Heart left ventricle (tissue), 16 donors: ENCODE measurements at regions of chrX and their contacts with region 1.

Region 1: GRCh38 chrX:110407910-110408545 is 49.4 kb downstream of the RTL9 start:
- DNase-seq: peak in 2 of 5 donors; percentile 32 to 50
- ATAC-seq: peak in 3 of 4 donors; percentile 59 to 77 (median 62)
- H3K4me3 ChIP-seq: no peak overlapping the region
- H3K27ac ChIP-seq: no peak overlapping the region
- H3K4me1 ChIP-seq: peaks cover 0 to 4% (median 0%) of the 10 kb centered on the region in 12 donors
- H3K27me3 ChIP-seq: peaks cover 0 to 49% (median 0%) of the 10 kb centered on the region in 9 donors
- CTCF ChIP-seq: peak; percentile 55 to 74 (median 66)
- POLR2A ChIP-seq: no peak

Region 2: DNA sequence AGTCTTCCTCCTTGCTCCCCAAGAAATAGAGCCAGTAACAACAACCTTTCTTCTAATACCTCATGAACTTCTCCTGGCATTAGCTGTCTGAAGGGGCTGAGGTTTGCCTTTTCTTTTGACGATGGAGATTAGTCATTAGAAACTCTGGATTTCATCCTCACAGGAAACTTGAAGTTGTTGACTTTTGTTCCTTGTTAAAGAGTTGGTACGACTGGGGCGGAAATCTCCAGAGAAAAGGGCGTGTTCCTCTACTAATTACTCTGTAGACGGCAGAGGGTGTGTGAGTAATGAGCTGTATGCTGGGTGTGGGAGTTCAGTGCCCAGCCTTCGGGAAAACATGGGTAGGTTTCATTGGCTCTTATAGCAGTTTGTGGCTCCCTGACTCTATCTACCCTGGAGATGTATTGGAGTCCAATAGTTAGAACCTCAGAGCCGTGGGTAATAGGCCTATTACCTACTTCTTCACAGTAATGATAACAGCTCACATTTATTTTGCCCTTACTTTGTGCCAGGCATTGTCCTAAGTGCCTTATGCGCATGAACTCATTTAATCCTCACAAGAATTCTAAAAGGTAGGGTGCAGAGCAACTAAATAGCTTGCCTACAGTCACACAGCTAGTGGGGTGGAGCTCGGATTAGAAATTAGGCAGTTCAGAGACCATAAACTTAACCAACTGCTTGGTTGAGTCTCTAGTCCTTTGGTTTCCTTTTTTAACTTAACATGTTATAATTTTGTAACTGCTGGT is 381.8 kb before region 1 on chrX:
- intact Hi-C with region 1: loop called in 1 of 10 experiments (anchors 5 kb)
- DNase-seq: no peak
- ATAC-seq: peak in 3 of 4 donors; percentile 59 to 78 (median 60)
- H3K4me3 ChIP-seq: no peak overlapping the region
- H3K27ac ChIP-seq: peak overlapping the region in 7 of 12 donors; percentile 18 to 61 (median 49)
- H3K4me1 ChIP-seq: peaks cover 0 to 39% (median 8%) of the 10 kb centered on the region in 12 donors
- H3K27me3 ChIP-seq: peaks cover 0 to 10% (median 0%) of the 10 kb centered on the region in 9 donors
- CTCF ChIP-seq: no peak
- POLR2A ChIP-seq: no peak

Region 3: DNA sequence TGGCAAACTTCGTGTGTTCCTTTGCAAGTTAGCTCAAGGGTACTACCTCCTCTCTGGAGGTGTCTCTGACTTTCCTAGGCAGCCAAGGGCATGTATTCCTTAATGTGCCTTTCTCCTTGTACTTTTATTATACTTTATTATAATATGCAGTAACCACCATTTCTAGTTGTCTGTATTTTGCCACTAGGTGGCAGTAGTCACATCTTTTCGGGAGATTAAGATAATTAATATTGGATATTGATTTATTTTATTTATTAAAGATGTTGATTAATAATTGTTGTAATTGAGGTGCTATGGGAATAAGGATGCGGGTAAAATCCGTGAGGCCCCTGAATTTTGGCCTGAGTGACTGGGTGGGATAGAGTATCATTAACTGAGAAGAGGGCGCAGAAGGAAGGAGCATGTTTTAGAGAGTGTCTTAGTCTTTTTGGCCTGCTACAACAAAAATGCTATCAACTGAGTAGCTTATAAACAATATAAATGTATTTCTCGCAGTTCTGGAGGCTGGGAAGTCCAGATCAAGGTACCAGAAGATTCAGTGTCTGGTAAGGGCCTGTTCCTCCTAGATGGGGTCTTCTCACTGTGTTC is 251.8 kb before region 1 on chrX:
- intact Hi-C with region 1: loop called (anchors 1 to 5 kb)
- DNase-seq: no peak
- ATAC-seq: no peak
- H3K4me3 ChIP-seq: no peak overlapping the region
- H3K27ac ChIP-seq: no peak overlapping the region
- H3K4me1 ChIP-seq: peaks cover 0 to 10% (median 4%) of the 10 kb centered on the region in 12 donors
- H3K27me3 ChIP-seq: peaks cover 0 to 5% (median 0%) of the 10 kb centered on the region in 9 donors
- CTCF ChIP-seq: peak; percentile 22 to 62 (median 52)
- POLR2A ChIP-seq: no peak

Region 4: GRCh38 chrX:110167952-110168451 is 240.0 kb before region 1 on chrX:
- intact Hi-C with region 1: loop called in 3 of 10 experiments (anchors 2 to 5 kb)
- DNase-seq: no peak
- ATAC-seq: peak; percentile 24 to 50 (median 34)
- H3K4me3 ChIP-seq: no peak overlapping the region
- H3K27ac ChIP-seq: no peak overlapping the region
- H3K4me1 ChIP-seq: peaks cover 0 to 9% (median 0%) of the 10 kb centered on the region in 12 donors
- H3K27me3 ChIP-seq: no peaks in the 10 kb centered on the region
- CTCF ChIP-seq: peak; percentile 29 to 63 (median 47)
- POLR2A ChIP-seq: no peak

Region 5: GRCh38 chrX:110317820-110318658 is 90.0 kb before region 1 on chrX and contains the start of gene AMMECR1:
- intact Hi-C with region 1: loop called in 1 of 10 experiments (anchors 10 kb)
- DNase-seq: peak; percentile 72 to 86 (median 79)
- ATAC-seq: peak; percentile 91 to 97 (median 96)
- H3K4me3 ChIP-seq: peak within 1 kb of the TSS; percentile 47 to 97 (median 80)
- H3K27ac ChIP-seq: peak within 1 kb of the TSS; percentile 65 to 86 (median 80)
- H3K4me1 ChIP-seq: peaks cover 0 to 14% (median 3%) of the 10 kb centered on the region in 12 donors
- H3K27me3 ChIP-seq: peaks cover 0 to 26% (median 0%) of the 10 kb centered on the region in 9 donors
- CTCF ChIP-seq: peak in 1 of 12 donors; percentile 5
- POLR2A ChIP-seq: peak in 1 of 2 donors; percentile 34
- total RNA-seq, gene AMMECR1: 0.56 to 4.1 (median 1.2) TPM

Region 6: GRCh38 chrX:110359273-110359672 is 48.8 kb before region 1 on chrX:
- intact Hi-C with region 1: loop called in 1 of 10 experiments (anchors 10 kb)
- DNase-seq: no peak
- ATAC-seq: no peak
- H3K4me3 ChIP-seq: no peak overlapping the region
- H3K27ac ChIP-seq: no peak overlapping the region
- H3K4me1 ChIP-seq: no peaks in the 10 kb centered on the region
- H3K27me3 ChIP-seq: peaks cover 0 to 25% (median 0%) of the 10 kb centered on the region in 9 donors
- CTCF ChIP-seq: no peak
- POLR2A ChIP-seq: no peak

Region 7: GRCh38 chrX:110491846-110492620 is 84.0 kb after region 1 on chrX:
- intact Hi-C with region 1: no loop called
- DNase-seq: no peak
- ATAC-seq: no peak
- H3K4me3 ChIP-seq: no peak overlapping the region
- H3K27ac ChIP-seq: no peak overlapping the region
- H3K4me1 ChIP-seq: no peaks in the 10 kb centered on the region
- H3K27me3 ChIP-seq: peaks cover 0 to 12% (median 0%) of the 10 kb centered on the region in 9 donors
- CTCF ChIP-seq: no peak
- POLR2A ChIP-seq: no peak